MCF 10A (cell line): ENCODE measurements at regions of chr2 and their contacts with region 1.

Region 1: GRCh38 chr2:202278944-202279343 is 13.4 kb downstream of the NOP58 start:
- DNase-seq: peak; percentile 56
- H3K4me3 Mint-ChIP-seq: no peak overlapping the region
- H3K27ac Mint-ChIP-seq: peak overlapping the region; percentile 57
- H3K4me1 Mint-ChIP-seq: peaks cover 16% of the 10 kb centered on the region
- H3K27me3 Mint-ChIP-seq: no peaks in the 10 kb centered on the region
- CTCF ChIP-seq: peak; percentile 41

Region 2: GRCh38 chr2:202238234-202239197 is 40.4 kb before region 1 on chr2 and contains the start of gene SUMO1:
- CTCF ChIA-PET with region 1: interaction called, 3 read pairs
- POLR2A ChIA-PET with region 1: interaction called, 26 read pairs
- intact Hi-C with region 1: loop called (anchors 5 kb)
- DNase-seq: peak; percentile 90
- H3K4me3 Mint-ChIP-seq: peak within 1 kb of the TSS; percentile 93
- H3K27ac Mint-ChIP-seq: peak within 1 kb of the TSS; percentile 85
- H3K4me1 Mint-ChIP-seq: peaks cover 8% of the 10 kb centered on the region
- H3K27me3 Mint-ChIP-seq: no peaks in the 10 kb centered on the region
- CTCF ChIP-seq: no peak
- total RNA-seq, gene SUMO1: 67.9 and 71.9 TPM in 2 replicates

Region 3: DNA sequence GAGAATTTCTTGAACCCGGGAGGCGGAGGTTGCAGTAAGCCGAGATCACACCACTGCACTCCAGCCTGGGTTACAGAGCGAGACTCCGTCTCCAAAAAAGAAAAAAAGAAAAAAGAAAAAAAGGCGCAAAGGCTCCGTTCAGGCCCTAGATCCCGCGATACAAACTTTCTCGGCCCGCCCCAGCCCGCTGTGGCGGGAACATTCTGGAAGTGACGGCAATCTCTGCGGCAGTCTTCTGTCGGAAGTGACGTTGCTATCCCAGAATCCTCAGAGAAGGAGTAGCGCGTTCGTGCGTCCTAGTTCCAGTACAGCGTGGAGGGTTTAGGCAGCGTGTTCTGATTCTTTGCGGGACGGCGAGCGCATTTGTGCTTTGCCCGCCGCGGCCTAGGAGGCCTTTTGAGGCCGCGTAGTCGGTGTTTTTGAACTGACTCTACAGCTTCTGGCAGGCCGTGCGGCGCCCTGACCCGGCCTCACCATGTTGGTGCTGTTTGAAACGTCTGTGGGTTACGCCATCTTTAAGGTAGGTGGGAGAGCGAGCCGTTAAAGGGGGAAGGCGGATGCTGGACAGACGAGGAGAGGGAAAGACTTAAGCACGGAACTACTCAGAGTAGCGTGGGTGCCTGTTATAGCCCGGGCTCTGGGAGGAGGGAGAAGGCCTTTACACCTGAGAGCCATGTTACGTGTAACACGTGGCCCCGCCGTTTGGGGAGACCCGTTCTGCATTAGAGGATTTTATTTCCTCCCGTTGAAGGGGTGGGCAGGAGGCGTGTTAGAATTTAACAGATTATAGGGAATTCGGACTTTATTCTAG is 13.3 kb before region 1 on chr2 and contains the start of gene NOP58:
- CTCF ChIA-PET with region 1: interaction called, 11 read pairs
- POLR2A ChIA-PET with region 1: interaction called, 94 read pairs
- intact Hi-C with region 1: loop called (anchors 1 kb)
- DNase-seq: peak; percentile 96
- H3K4me3 Mint-ChIP-seq: no peak within 1 kb of the TSS
- H3K27ac Mint-ChIP-seq: peak within 1 kb of the TSS; percentile 64
- H3K4me1 Mint-ChIP-seq: peaks cover 7% of the 10 kb centered on the region
- H3K27me3 Mint-ChIP-seq: no peaks in the 10 kb centered on the region
- CTCF ChIP-seq: no peak
- total RNA-seq, gene NOP58: 212 and 231 TPM in 2 replicates

Region 4: DNA sequence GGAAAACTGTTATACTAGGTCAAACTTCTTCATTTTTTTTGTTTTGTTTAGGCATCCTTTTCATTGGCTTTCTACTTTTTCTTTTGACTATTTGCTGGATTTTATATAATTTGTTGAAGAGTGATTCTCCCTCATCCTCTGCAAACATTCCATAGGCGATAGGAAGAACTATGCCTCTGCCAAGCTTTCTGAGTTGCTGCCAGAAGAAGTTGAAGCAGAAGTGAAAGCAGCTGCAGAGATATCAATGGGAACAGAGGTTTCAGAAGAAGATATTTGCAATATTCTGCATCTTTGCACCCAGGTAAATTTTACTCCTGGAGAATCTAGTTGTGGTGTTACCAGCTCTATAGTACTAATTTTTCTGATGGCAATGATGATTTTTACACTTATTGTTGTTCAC is 12.0 kb after region 1 on chr2:
- CTCF ChIA-PET with region 1: interaction called, 14 read pairs
- POLR2A ChIA-PET with region 1: interaction called, 10 read pairs
- intact Hi-C with region 1: no loop called
- DNase-seq: no peak
- H3K4me3 Mint-ChIP-seq: no peak overlapping the region
- H3K27ac Mint-ChIP-seq: no peak overlapping the region
- H3K4me1 Mint-ChIP-seq: peaks cover 4% of the 10 kb centered on the region
- H3K27me3 Mint-ChIP-seq: no peaks in the 10 kb centered on the region
- CTCF ChIP-seq: no peak

Region 5: DNA sequence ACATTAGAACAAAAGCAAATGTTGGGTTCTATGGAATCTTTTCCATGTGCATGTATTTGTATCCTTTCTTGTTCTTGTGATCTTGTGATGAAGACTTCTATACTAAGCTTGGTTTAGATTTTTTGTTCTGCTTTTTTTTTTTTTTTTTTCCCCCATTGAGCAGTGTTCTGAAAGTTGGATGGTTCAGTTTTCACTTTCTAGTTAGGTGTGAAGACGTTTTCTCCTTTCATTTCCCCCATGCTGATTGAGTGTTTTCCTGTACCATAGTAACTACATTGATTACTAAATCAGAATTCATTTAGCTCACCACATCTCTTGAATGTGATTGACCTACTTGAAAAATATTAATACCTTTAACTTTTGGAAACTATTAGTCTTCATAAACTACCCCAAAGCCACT is 20.8 kb after region 1 on chr2:
- CTCF ChIA-PET with region 1: interaction called, 14 read pairs
- POLR2A ChIA-PET with region 1: interaction called, 6 read pairs
- intact Hi-C with region 1: no loop called
- DNase-seq: no peak
- H3K4me3 Mint-ChIP-seq: no peak overlapping the region
- H3K27ac Mint-ChIP-seq: no peak overlapping the region
- H3K4me1 Mint-ChIP-seq: no peaks in the 10 kb centered on the region
- H3K27me3 Mint-ChIP-seq: no peaks in the 10 kb centered on the region
- CTCF ChIP-seq: no peak